ENCODE measurements at regions of chr1 and their contacts with region 1.

Region 1: GRCh38 chr1:17419626-17420328 is 19.7 kb downstream of the RCC2 start:
- DNase-seq: no peak
- H3K4me3 ChIP-seq: no peak overlapping the region
- H3K27ac ChIP-seq: no peak overlapping the region
- H3K4me1 ChIP-seq: peaks cover 5% of the 10 kb centered on the region
- H3K27me3 ChIP-seq: no peaks in the 10 kb centered on the region
- CTCF ChIP-seq: peak; percentile 89 to 97 (median 90)
- POLR2A ChIP-seq: no peak

Region 2: DNA sequence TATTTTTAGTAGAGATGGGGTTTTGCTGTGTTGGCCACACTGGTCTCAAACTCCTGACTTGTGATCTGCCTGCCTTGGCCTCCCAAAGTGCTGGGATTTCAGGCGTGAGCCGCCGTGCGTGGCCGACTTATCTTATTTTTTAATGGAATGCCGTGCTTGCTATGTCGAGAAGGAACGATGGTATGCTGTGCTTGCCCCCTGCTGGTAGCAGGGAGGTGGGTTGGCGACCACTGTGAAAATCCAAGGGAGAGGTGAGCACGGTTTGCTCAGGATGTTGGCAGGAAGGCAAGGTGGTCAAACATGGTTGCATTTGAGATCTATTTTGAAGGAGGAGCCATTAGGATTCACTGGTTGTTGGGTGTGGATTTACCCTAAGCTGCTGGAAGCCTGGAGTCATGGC is 65.5 kb after region 1 on chr1:
- intact Hi-C with region 1: loop called (anchors 5 kb)
- DNase-seq: no peak
- H3K4me3 ChIP-seq: no peak overlapping the region
- H3K27ac ChIP-seq: no peak overlapping the region
- H3K4me1 ChIP-seq: peaks cover 12% of the 10 kb centered on the region
- H3K27me3 ChIP-seq: no peaks in the 10 kb centered on the region
- CTCF ChIP-seq: no peak
- POLR2A ChIP-seq: no peak